ENCODE measurements at regions of chr7 and their contacts with region 1.

Region 1: DNA sequence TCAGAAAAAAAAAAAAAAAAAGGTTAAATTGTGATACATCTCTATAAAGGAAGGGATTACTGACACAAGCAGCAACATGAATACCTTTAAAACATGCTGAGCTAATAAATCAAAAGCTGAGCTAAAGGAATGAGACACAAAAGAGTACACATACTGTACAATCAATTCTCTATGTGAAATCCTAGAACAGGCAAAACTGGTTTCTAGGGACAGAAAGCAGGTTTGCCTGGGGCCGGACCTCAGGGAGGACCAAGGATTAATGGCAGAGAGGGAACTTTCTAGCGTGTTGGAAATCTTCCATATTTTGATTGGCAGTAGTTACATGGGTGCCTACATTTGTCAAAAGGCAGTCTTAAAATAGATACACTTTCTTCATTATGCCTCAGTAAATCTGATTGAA is 52.5 kb downstream of the KLRG2 start:
- DNase-seq: no peak
- H3K4me3 Mint-ChIP-seq: no peak overlapping the region
- H3K27ac Mint-ChIP-seq: no peak overlapping the region
- H3K4me1 Mint-ChIP-seq: peaks cover 4% of the 10 kb centered on the region
- H3K27me3 Mint-ChIP-seq: no peaks in the 10 kb centered on the region

Region 2: DNA sequence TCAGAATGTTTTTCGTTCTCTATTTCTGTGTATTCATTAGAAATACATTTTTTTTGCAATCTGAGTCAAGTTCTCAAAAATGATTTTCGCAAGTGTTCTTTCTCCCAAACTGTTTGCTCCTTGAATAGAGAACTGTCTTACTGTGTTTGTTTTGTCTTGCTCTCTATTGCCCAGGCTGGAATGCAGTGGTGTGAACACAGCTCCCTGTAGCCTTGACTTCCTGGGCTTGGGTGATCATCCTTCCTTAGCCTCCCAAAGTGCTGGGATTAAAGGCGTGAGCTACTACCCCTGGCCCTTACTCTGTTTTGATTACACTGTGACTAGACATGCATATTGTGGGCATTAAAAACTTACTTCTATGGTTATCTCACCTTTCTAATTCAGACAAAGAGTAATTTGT is 14.6 kb before region 1 on chr7:
- CTCF ChIA-PET with region 1: interaction called, 39 read pairs
- DNase-seq: no peak
- H3K4me3 Mint-ChIP-seq: no peak overlapping the region
- H3K27ac Mint-ChIP-seq: no peak overlapping the region
- H3K4me1 Mint-ChIP-seq: no peaks in the 10 kb centered on the region
- H3K27me3 Mint-ChIP-seq: no peaks in the 10 kb centered on the region

Region 3: DNA sequence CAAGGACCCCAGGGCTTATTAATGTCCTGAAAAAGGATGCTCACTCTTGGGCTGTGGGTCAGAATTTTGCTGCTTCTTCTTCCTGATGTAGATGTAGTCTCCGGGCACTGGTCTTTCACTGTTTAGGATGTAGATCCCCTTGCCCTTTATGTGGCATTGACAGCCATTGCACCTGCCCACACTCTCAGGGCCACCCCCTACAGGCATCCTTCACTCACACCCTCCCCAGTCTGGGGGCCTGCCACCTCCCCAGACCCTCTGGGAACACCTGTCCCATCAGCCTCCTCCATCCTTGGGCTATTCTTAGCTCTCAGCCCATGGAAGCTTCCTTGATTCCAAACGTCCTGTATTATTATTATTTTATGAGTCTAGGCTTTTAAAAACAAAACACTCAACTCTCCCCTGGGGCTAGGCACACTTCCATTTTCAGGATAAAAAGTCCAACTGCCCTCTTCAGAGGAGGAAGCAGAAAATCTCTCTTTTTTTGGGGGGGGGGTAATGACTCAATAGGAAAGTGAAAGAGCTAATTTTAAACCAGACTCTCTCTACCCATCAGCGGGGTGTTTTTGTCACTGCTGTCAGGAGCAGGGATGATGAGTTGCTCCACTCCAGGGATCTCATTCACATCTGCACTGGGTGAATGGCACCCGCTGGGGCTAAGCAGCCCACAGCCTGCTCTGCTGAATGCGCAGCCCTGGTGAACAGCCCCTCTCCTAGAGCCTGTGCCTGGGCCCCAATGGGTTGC is 64.0 kb after region 1 on chr7:
- CTCF ChIA-PET with region 1: interaction called, 12 read pairs
- DNase-seq: peak; percentile 35
- H3K4me3 Mint-ChIP-seq: no peak overlapping the region
- H3K27ac Mint-ChIP-seq: peak overlapping the region; percentile 45
- H3K4me1 Mint-ChIP-seq: peaks cover 27% of the 10 kb centered on the region
- H3K27me3 Mint-ChIP-seq: peaks cover 46% of the 10 kb centered on the region